Activated CD4-positive, alpha-beta T cell treated with anti-CD3 and anti-CD28 coated beads for 36 hours (primary cell): ENCODE measurements at regions of chr2 and their contacts with region 1.

Region 1: GRCh38 chr2:143259368-143259958 is 130.2 kb downstream of the ARHGAP15 start:
- DNase-seq: peak; percentile 81
- ATAC-seq: no peak
- H3K4me3 Mint-ChIP-seq: peak overlapping the region; percentile 53
- H3K27ac Mint-ChIP-seq: peak overlapping the region; percentile 72
- H3K4me1 Mint-ChIP-seq: peaks cover 78% of the 10 kb centered on the region
- H3K27me3 Mint-ChIP-seq: no peaks in the 10 kb centered on the region

Region 2: GRCh38 chr2:143128681-143129580 is 130.5 kb before region 1 on chr2 and contains the start of gene ARHGAP15:
- CTCF ChIA-PET with region 1: interaction called, 32 read pairs
- POLR2A ChIA-PET with region 1: no interaction called
- intact Hi-C with region 1: loop called (anchors 1 to 2 kb)
- DNase-seq: peak; percentile 83
- ATAC-seq: peak; percentile 81
- H3K4me3 Mint-ChIP-seq: peak within 1 kb of the TSS; percentile 71
- H3K27ac Mint-ChIP-seq: peak within 1 kb of the TSS; percentile 99
- H3K4me1 Mint-ChIP-seq: peaks cover 34% of the 10 kb centered on the region
- H3K27me3 Mint-ChIP-seq: no peaks in the 10 kb centered on the region
- total RNA-seq, gene ARHGAP15: 62.6 to 64.3 TPM

Region 3: DNA sequence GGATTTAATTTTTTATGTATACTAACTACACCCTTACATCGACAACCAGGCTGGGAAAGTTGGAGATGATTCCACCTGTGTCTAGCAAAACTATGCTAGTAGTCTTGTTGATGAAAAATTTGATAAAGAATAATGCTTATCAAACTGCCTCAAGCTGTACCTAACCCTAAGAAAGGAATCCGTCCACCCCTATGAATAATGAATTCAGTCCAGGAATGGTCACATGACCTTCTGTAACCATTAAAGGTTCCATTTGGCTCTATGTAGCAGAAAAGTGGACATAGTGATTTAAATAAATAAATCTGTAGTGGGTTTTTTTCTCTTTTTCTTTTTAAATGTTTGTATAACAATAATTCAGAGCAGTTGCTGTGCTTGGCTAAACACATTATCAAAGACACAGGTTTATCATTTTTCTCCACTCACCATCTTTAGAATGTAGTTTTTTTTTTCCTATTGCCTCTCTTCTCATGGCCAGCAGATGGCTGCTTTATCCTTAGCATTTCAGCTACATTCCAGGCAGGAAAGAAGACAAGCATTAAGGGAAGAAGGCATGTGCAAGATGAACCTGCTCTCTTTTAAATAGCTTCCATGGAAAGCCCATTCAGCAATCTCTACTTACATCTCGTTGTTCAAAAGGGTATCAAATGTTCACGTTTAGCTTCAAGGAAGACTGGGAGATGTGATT is 87.8 kb before region 1 on chr2:
- CTCF ChIA-PET with region 1: interaction called, 14 read pairs
- POLR2A ChIA-PET with region 1: no interaction called
- intact Hi-C with region 1: no loop called
- DNase-seq: no peak
- ATAC-seq: no peak
- H3K4me3 Mint-ChIP-seq: no peak overlapping the region
- H3K27ac Mint-ChIP-seq: no peak overlapping the region
- H3K4me1 Mint-ChIP-seq: peaks cover 62% of the 10 kb centered on the region
- H3K27me3 Mint-ChIP-seq: no peaks in the 10 kb centered on the region

Region 4: DNA sequence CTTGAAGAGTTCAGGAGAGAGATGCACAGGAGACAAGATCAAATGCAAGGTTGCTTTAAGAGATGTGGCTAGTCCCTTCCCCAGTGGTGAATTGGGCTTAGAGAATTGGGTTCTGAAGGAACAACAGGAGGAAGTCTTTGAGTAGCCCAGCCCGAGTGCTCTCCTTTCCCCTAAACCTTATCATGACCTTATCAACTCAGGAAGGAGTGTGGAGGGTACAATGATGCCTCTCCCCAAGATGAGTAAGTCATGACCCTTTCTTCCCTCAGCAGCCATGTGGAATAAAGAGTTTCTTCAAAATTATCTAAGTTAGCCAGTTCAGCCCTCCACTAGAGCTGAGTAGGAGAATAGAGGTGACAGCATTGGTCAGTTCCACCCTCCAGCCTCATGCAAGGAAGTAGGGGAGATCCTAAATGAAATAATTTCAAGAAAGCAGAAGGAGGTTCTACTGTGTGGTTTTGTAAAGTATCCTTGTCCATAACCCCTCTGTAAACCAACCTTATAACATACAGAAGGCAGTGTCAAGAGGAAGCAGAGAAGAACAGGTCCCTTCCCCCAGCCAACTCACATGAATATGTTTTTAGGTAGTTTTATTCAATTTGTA is 41.8 kb before region 1 on chr2:
- CTCF ChIA-PET with region 1: interaction called, 14 read pairs
- POLR2A ChIA-PET with region 1: no interaction called
- intact Hi-C with region 1: loop called in 1 of 2 experiments (anchors 2 kb)
- DNase-seq: no peak
- ATAC-seq: peak; percentile 36
- H3K4me3 Mint-ChIP-seq: no peak overlapping the region
- H3K27ac Mint-ChIP-seq: peak overlapping the region; percentile 40
- H3K4me1 Mint-ChIP-seq: peaks cover 32% of the 10 kb centered on the region
- H3K27me3 Mint-ChIP-seq: no peaks in the 10 kb centered on the region

Region 5: GRCh38 chr2:143246815-143247744 is 12.4 kb before region 1 on chr2:
- CTCF ChIA-PET with region 1: interaction called, 17 read pairs
- POLR2A ChIA-PET with region 1: no interaction called
- intact Hi-C with region 1: no loop called
- DNase-seq: peak; percentile 33
- ATAC-seq: no peak
- H3K4me3 Mint-ChIP-seq: peak overlapping the region; percentile 4
- H3K27ac Mint-ChIP-seq: peak overlapping the region; percentile 15
- H3K4me1 Mint-ChIP-seq: peaks cover 24% of the 10 kb centered on the region
- H3K27me3 Mint-ChIP-seq: no peaks in the 10 kb centered on the region

Region 6: DNA sequence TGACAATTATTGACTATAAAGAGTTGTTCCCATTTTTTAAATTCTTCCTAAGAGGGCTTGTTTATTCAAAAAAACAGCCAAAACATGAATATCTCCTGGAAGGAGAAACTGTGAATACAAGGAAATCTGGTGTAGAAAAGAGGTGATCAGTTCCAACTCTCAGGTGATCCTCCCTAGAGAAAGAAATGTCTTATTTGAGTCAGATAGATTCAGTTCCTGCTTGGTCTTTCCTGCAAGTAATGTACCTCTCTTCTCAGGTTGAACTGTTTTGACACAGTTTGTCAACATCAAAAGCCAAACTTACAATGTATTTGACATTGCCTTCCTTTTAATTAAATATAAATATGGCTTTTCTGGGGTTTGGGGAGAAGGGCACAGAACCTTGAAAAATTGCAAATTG is 437.2 kb after region 1 on chr2:
- CTCF ChIA-PET with region 1: no interaction called
- POLR2A ChIA-PET with region 1: no interaction called
- intact Hi-C with region 1: loop called (anchors 5 kb)
- DNase-seq: no peak
- ATAC-seq: no peak
- H3K4me3 Mint-ChIP-seq: no peak overlapping the region
- H3K27ac Mint-ChIP-seq: no peak overlapping the region
- H3K4me1 Mint-ChIP-seq: peaks cover 56% of the 10 kb centered on the region
- H3K27me3 Mint-ChIP-seq: no peaks in the 10 kb centered on the region

Region 7: GRCh38 chr2:144288438-144288837 is 1029.0 kb after region 1 on chr2:
- CTCF ChIA-PET with region 1: no interaction called
- POLR2A ChIA-PET with region 1: no interaction called
- intact Hi-C with region 1: no loop called
- DNase-seq: no peak
- ATAC-seq: no peak
- H3K4me3 Mint-ChIP-seq: no peak overlapping the region
- H3K27ac Mint-ChIP-seq: no peak overlapping the region
- H3K4me1 Mint-ChIP-seq: no peaks in the 10 kb centered on the region
- H3K27me3 Mint-ChIP-seq: no peaks in the 10 kb centered on the region

Region 8: GRCh38 chr2:144320491-144320890 is 1061.0 kb after region 1 on chr2:
- CTCF ChIA-PET with region 1: no interaction called
- POLR2A ChIA-PET with region 1: no interaction called
- intact Hi-C with region 1: loop called in 1 of 2 experiments (anchors 10 kb)
- DNase-seq: peak; percentile 70
- ATAC-seq: peak; percentile 49
- H3K4me3 Mint-ChIP-seq: peak overlapping the region; percentile 13
- H3K27ac Mint-ChIP-seq: peak overlapping the region; percentile 71
- H3K4me1 Mint-ChIP-seq: peaks cover 47% of the 10 kb centered on the region
- H3K27me3 Mint-ChIP-seq: no peaks in the 10 kb centered on the region